ENCODE measurements at regions of chr2 and their contacts with region 1.

Region 1: DNA sequence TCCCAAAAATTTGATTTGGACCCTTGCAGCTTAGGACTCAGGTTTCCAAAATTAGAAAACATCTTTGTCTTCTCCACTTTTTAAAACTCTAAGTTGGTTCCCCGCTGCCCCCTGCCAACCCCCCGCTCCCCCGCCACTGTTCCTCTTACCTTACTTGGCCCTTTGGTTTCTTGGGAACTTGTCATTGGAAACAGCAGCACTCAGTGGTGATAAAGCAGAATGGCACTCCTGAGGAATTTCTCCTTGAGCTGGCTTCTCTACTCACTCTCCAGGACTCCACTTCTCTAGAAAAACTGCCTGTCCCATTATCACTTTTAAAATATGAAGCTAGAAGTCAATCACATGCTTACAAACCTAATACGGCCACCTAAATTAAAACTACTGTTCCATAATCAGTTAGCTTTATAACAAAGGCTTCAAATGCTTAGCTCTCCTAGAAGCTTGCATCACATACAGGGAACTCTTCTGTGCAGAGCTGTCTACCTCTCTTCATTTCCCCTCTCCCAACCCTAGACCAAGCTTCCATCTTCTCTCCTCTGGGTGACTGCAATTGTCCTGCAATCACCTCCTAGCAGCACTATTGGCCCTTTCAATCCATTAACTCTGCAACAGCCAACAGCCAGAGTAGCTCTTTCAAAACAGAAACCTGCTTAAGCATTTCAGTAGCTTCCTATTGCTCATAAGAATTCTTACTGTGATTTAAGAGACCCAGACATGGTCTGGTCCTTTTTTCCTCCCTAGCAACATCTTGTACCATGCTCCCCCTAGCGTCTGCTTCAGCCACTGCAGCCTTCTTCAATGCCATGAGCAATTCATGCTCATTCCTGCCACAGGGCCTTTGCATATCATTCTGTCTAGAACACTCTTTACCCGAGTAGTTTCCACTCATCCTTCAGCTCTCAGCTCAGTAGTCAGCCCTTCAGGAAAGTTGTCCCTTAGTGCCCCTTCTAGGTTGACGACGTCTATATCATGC is 15.2 kb upstream of the PLEKHM3 start:
- DNase-seq: peak; percentile 58
- H3K4me3 ChIP-seq: no peak overlapping the region
- H3K27ac ChIP-seq: no peak overlapping the region
- H3K4me1 ChIP-seq: no peaks in the 10 kb centered on the region
- H3K27me3 ChIP-seq: no peaks in the 10 kb centered on the region
- CTCF ChIP-seq: peak; percentile 82
- EP300 ChIP-seq: no peak
- RAD21 ChIP-seq: peak; percentile 68

Region 2: GRCh38 chr2:207692206-207693065 is 348.0 kb before region 1 on chr2:
- CTCF ChIA-PET with region 1: no interaction called
- POLR2A ChIA-PET with region 1: no interaction called
- DNase-seq: peak; percentile 59
- H3K4me3 ChIP-seq: no peak overlapping the region; a peak in 1 of 4 replicates
- H3K27ac ChIP-seq: no peak overlapping the region
- H3K4me1 ChIP-seq: no peaks in the 10 kb centered on the region
- H3K27me3 ChIP-seq: no peaks in the 10 kb centered on the region
- CTCF ChIP-seq: peak; percentile 66
- EP300 ChIP-seq: no peak
- RAD21 ChIP-seq: peak; percentile 48

Region 3: DNA sequence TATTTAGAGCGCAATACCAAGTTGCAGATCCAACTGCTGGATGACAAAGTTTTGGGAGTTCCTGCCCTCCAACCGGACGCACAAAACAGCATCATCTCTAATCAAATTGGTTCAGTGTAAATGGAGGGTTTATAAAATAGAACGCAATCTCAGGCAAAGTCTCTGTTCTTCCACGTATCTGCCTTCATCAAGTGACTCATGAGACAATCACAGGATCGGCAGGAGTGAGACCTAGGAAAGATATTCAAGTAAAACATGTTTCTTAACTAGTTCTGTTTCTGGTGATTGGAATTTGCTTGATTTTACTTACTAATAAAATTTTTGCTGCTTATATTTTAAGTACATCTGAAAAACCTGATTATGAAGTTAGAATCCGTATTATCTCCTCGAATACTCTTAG is 278.3 kb before region 1 on chr2:
- CTCF ChIA-PET with region 1: interaction called, 11 read pairs
- POLR2A ChIA-PET with region 1: no interaction called
- DNase-seq: no peak
- H3K4me3 ChIP-seq: no peak overlapping the region
- H3K27ac ChIP-seq: no peak overlapping the region; a peak in 1 of 4 replicates
- H3K4me1 ChIP-seq: peaks cover 6 to 10% of the 10 kb centered on the region in 2 experiments; a peak in 2 of 4 replicates
- H3K27me3 ChIP-seq: no peaks in the 10 kb centered on the region
- CTCF ChIP-seq: no peak
- EP300 ChIP-seq: no peak
- RAD21 ChIP-seq: no peak

Region 4: DNA sequence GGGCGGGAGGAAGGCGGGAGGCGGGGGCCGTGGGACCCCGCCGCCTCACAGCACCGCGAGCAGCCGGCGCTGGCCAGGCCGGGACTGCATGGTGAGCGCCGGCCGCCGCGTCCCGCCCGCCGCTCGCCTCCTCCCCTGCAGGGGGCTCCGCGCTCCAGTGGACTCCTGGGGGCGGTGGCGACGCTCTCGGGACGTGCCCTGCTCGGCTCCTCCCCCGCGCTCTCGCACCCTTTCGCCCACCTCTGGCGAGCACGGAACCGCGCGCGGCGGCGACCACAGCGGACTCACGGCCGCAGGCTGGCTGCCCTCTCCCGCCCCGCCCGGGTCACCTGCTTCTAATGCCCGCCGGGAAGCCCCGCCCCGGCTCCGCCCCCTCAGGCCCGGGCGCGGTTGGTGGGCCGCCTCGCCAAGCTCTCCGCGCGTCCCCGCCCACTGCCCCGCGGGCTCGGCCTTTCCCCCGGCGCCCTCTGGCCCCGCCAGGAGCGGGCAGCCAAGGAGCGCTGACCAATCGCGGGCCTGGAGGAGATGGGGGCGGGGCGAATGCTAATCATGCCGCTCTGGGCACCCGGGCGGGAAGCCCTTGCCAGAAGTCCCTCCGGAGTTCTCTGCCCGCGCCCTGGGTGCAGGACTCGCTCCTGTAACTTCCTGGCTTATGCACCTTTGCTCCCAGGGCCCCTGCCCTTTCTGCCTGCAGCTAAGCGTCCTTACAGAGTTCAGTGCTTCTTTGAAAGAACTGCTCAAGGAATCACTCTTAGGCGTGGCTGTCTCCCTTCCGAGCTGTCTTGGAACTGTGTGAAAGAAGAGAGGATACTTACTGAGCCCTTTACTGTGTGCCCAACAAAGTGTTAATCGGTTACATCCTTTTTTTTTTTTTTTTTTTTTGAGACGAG is 270.6 kb before region 1 on chr2 and contains the start of gene FZD5:
- CTCF ChIA-PET with region 1: interaction called, 10 read pairs
- POLR2A ChIA-PET with region 1: no interaction called
- DNase-seq: peak; percentile 98
- H3K4me3 ChIP-seq: peak within 1 kb of the TSS; percentile 79 to 89
- H3K27ac ChIP-seq: peak within 1 kb of the TSS; percentile 11 to 33; a peak in 2 of 4 replicates
- H3K4me1 ChIP-seq: peaks cover 0 to 18% of the 10 kb centered on the region in 2 experiments; a peak in 1 of 4 replicates
- H3K27me3 ChIP-seq: no peaks in the 10 kb centered on the region
- CTCF ChIP-seq: peak; percentile 49
- EP300 ChIP-seq: no peak
- RAD21 ChIP-seq: peak; percentile 42
- polyA plus RNA-seq, gene FZD5: 0.52 and 0.72 TPM in 2 replicates

Region 5: DNA sequence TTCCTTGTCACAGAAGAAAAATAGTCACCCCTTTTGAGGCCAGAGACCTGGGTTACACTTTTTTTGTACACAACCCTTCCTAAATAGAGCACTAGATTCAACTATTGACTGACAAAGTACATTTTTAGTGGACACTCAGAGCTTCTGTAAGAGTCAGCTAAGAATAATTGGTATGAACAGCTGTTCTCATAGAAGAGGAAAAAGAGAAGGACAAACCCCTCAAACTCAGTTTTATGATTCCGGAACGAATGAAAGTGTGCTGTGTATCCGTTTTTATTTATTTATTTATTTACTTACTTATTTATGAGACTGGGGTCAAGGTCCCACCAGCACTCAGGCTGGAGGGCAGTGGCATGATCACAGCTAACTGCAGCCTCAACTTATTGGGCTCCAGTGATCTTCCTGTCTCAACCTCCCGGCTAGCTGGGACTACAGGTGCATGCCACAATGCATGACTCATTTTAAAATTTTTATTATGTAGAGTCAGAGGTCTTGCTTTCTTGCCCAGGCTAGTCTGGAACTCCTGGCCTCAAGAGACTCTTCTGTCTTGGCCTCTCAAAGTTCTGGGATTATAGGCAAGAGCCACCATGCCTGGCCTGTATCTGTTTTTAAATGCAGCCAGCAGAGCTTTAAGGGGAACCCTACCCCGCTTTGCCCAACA is 234.8 kb before region 1 on chr2:
- CTCF ChIA-PET with region 1: no interaction called
- POLR2A ChIA-PET with region 1: no interaction called
- DNase-seq: no peak
- H3K4me3 ChIP-seq: no peak overlapping the region
- H3K27ac ChIP-seq: peak overlapping the region in 1 of 2 experiments; percentile 32; a peak in 2 of 4 replicates
- H3K4me1 ChIP-seq: peaks cover 4 to 5% of the 10 kb centered on the region in 2 experiments; a peak in 2 of 4 replicates
- H3K27me3 ChIP-seq: no peaks in the 10 kb centered on the region
- CTCF ChIP-seq: no peak
- EP300 ChIP-seq: no peak; a peak in 1 of 4 replicates
- RAD21 ChIP-seq: no peak

Region 6: DNA sequence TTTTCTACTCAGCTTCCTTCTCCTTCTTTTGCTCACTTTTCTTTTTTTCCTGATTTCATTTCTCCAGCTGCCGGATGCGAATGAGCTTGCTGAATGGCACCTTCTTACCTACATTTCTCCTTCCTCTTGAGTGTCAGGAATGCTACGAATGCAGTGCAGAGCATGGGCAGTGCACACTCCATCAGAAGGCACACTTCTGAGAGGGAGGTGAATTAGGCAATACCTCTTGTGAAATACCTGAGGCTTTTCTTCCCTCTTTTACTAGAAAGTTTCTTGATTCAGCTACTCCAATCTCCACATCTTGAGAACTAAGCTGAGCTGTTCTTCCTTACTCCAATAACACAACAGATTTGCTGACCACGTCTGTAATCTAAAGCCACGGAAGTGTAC is 66.3 kb before region 1 on chr2:
- CTCF ChIA-PET with region 1: interaction called, 18 read pairs
- POLR2A ChIA-PET with region 1: no interaction called
- DNase-seq: no peak
- H3K4me3 ChIP-seq: no peak overlapping the region
- H3K27ac ChIP-seq: no peak overlapping the region
- H3K4me1 ChIP-seq: peaks cover 0 to 4% of the 10 kb centered on the region in 2 experiments; a peak in 2 of 4 replicates
- H3K27me3 ChIP-seq: no peaks in the 10 kb centered on the region
- CTCF ChIP-seq: no peak
- EP300 ChIP-seq: no peak
- RAD21 ChIP-seq: no peak

Region 7: GRCh38 chr2:208025037-208025813 is 15.3 kb before region 1 on chr2 and contains the start of gene PLEKHM3:
- CTCF ChIA-PET with region 1: interaction called, 28 read pairs
- POLR2A ChIA-PET with region 1: interaction called, 11 read pairs
- DNase-seq: peak; percentile 88
- H3K4me3 ChIP-seq: peak within 1 kb of the TSS; percentile 74 to 86
- H3K27ac ChIP-seq: peak within 1 kb of the TSS; percentile 40 to 81
- H3K4me1 ChIP-seq: peaks cover 4 to 6% of the 10 kb centered on the region in 2 experiments; a peak in 3 of 4 replicates
- H3K27me3 ChIP-seq: no peaks in the 10 kb centered on the region
- CTCF ChIP-seq: no peak
- EP300 ChIP-seq: peak; percentile 14 to 55; a peak in 1 of 4 replicates
- RAD21 ChIP-seq: no peak
- polyA plus RNA-seq, gene PLEKHM3: 1.9 and 2.1 TPM in 2 replicates

Region 8: GRCh38 chr2:208062113-208062512 is 21.6 kb after region 1 on chr2:
- CTCF ChIA-PET with region 1: interaction called, 11 read pairs
- POLR2A ChIA-PET with region 1: no interaction called
- DNase-seq: no peak
- H3K4me3 ChIP-seq: no peak overlapping the region; a peak in 1 of 4 replicates
- H3K27ac ChIP-seq: peak overlapping the region in 1 of 2 experiments; percentile 28; a peak in 1 of 4 replicates
- H3K4me1 ChIP-seq: peaks cover 0 to 4% of the 10 kb centered on the region in 2 experiments; a peak in 2 of 4 replicates
- H3K27me3 ChIP-seq: no peaks in the 10 kb centered on the region
- CTCF ChIP-seq: peak; percentile 51
- EP300 ChIP-seq: no peak
- RAD21 ChIP-seq: peak; percentile 66

Region 9: GRCh38 chr2:208072250-208072892 is 31.9 kb after region 1 on chr2:
- CTCF ChIA-PET with region 1: interaction called, 17 read pairs
- POLR2A ChIA-PET with region 1: no interaction called
- DNase-seq: peak; percentile 71
- H3K4me3 ChIP-seq: no peak overlapping the region; a peak in 1 of 4 replicates
- H3K27ac ChIP-seq: no peak overlapping the region
- H3K4me1 ChIP-seq: no peaks in the 10 kb centered on the region
- H3K27me3 ChIP-seq: no peaks in the 10 kb centered on the region
- CTCF ChIP-seq: peak; percentile 84
- EP300 ChIP-seq: no peak
- RAD21 ChIP-seq: peak; percentile 96

Measured in SK-N-SH (cell line).